ENCODE measurements at regions of chr10 and their contacts with region 1.

Region 1: GRCh38 chr10:114937962-114938855 is at the start of gene TRUB1:
- DNase-seq: peak; percentile 97
- H3K4me3 Mint-ChIP-seq: peak within 1 kb of the TSS; percentile 95
- H3K27ac Mint-ChIP-seq: peak within 1 kb of the TSS; percentile 82
- H3K4me1 Mint-ChIP-seq: peaks cover 29% of the 10 kb centered on the region
- H3K27me3 Mint-ChIP-seq: no peaks in the 10 kb centered on the region
- total RNA-seq, gene TRUB1: 15.2 to 15.3 TPM

Region 2: DNA sequence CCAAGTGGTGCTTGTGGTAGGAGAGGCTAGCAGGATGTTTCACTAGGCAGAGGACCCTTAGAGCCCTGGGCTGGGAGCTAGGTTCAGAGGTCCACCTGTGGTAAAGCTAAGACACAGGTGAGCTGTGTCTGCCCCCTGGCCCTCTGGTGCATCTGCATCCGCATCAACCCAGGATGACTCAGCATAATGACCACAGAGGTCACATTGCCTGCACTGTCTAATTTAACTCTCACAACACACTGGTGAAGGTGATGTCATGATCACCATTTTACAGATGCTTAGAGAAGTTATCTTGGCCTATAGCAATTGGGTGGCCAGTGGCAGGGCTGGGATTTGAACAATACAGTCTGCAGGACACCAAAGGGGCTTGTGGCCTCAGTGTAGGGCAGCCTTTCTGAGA is 1352.3 kb before region 1 on chr10:
- CTCF ChIA-PET with region 1: no interaction called
- intact Hi-C with region 1: no loop called
- DNase-seq: no peak
- H3K4me3 Mint-ChIP-seq: no peak overlapping the region
- H3K27ac Mint-ChIP-seq: no peak overlapping the region
- H3K4me1 Mint-ChIP-seq: no peaks in the 10 kb centered on the region
- H3K27me3 Mint-ChIP-seq: peaks cover 18% of the 10 kb centered on the region

Region 3: GRCh38 chr10:114952337-114952736 is 14.1 kb after region 1 on chr10:
- CTCF ChIA-PET with region 1: interaction called, 3 read pairs
- intact Hi-C with region 1: loop called (anchors 1 kb)
- DNase-seq: no peak
- H3K4me3 Mint-ChIP-seq: no peak overlapping the region
- H3K27ac Mint-ChIP-seq: no peak overlapping the region
- H3K4me1 Mint-ChIP-seq: peaks cover 45% of the 10 kb centered on the region
- H3K27me3 Mint-ChIP-seq: no peaks in the 10 kb centered on the region